Mammary epithelial cell (primary cell): ENCODE measurements at regions of chr7 and their contacts with region 1.

Region 1: DNA sequence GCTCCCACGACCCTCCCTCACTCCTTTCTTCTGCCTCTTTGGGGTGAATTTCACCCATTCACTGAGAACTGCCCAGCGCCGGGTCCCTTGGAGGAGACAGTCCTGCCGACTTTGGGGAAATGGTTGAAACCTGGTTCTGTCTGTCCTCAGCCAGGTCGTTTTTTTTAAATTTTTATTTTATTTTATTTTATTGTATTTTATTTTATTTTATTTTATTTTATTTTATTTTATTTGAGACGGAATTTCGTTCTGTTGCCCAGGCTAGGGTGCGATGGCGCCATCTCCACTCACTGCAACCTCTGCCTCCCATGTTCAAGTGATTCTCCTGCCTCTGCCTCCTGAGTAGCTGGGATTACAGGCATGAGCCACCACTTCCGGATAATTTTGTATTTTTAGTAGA is 105.9 kb upstream of the SH2B2 start:
- DNase-seq: no peak
- H3K4me3 ChIP-seq: no peak overlapping the region
- H3K27ac ChIP-seq: no peak overlapping the region
- H3K4me1 ChIP-seq: no peaks in the 10 kb centered on the region
- H3K27me3 ChIP-seq: no peaks in the 10 kb centered on the region
- CTCF ChIP-seq: no peak

Region 2: DNA sequence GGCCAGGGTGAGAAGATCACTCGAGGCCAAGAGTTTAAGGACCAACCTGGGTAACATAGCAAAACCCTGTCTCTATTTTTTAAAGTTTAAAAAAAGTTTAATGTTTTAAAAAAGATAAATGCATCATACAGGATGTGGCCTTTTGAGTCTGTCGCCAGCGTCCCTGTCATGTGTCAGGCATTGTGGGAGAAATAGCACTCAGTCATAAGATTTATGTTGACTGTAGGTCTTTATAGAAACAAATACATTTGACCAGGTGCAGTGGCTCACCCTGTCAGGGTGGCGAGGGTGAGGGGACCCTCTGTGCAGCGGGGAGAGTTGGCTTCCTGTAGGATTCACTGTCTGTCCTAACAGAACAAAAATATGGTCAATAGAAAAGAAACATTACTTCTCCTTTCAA is 42.5 kb after region 1 on chr7:
- CTCF ChIA-PET with region 1: no interaction called
- dilution Hi-C with region 1: no loop called
- in situ Hi-C with region 1: no loop called
- intact Hi-C with region 1: loop called (anchors 1 kb)
- DNase-seq: no peak
- H3K4me3 ChIP-seq: no peak overlapping the region
- H3K27ac ChIP-seq: no peak overlapping the region
- H3K4me1 ChIP-seq: no peaks in the 10 kb centered on the region
- H3K27me3 ChIP-seq: no peaks in the 10 kb centered on the region
- CTCF ChIP-seq: no peak